Activated naive CD4-positive, alpha-beta T cell treated with anti-CD3 and anti-CD28 coated beads for 36 hours (primary cell): ENCODE measurements at regions of chr15 and their contacts with region 1.

Region 1: DNA sequence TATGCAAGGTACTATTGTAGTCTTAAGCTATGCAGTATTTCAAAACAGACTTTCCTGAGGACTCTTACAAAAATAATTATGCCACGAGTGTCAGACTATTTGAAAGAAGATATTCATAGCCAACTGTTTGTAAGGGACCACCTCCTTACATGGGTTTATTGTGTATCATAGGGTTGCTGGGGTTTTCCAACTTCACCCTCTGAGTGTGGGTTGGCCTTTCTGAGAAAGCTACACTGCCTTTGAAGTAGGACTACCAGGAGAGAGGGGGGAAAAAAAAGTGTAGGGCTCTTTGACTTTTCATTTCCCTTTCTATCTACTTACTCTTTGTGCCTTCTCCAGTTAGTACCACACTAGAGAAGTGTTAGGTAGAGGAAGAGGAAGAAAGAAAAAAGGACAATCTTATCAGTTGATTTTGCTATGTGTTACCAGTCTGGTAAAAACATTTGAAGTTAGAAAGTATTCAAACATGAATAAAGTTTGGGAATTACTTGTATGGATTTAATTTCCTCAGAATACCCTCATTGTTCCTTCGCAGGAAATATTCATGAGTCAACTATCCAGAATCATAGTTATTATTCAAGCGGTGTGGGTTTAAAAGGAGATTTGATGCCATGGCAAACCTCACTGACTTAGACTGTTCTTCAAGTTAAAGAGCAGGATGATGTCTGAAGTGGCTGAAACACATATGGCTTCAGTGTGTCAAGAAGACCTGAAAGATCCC is 329.3 kb upstream of the THBS1 start:
- DNase-seq: peak; percentile 6
- H3K4me3 Mint-ChIP-seq: no peak overlapping the region
- H3K27ac Mint-ChIP-seq: no peak overlapping the region
- H3K4me1 Mint-ChIP-seq: peaks cover 10% of the 10 kb centered on the region
- H3K27me3 Mint-ChIP-seq: peaks cover 14% of the 10 kb centered on the region

Region 2: GRCh38 chr15:39125904-39126303 is 125.7 kb before region 1 on chr15:
- CTCF ChIA-PET with region 1: no interaction called
- intact Hi-C with region 1: loop called (anchors 10 kb)
- DNase-seq: peak; percentile 47
- H3K4me3 Mint-ChIP-seq: no peak overlapping the region
- H3K27ac Mint-ChIP-seq: no peak overlapping the region
- H3K4me1 Mint-ChIP-seq: no peaks in the 10 kb centered on the region
- H3K27me3 Mint-ChIP-seq: peaks cover 6% of the 10 kb centered on the region

Region 3: GRCh38 chr15:39140060-39140604 is 111.4 kb before region 1 on chr15:
- CTCF ChIA-PET with region 1: no interaction called
- intact Hi-C with region 1: no loop called
- DNase-seq: peak; percentile 20
- H3K4me3 Mint-ChIP-seq: no peak overlapping the region
- H3K27ac Mint-ChIP-seq: no peak overlapping the region
- H3K4me1 Mint-ChIP-seq: peaks cover 17% of the 10 kb centered on the region
- H3K27me3 Mint-ChIP-seq: peaks cover 13% of the 10 kb centered on the region

Region 4: GRCh38 chr15:39235092-39235795 is 16.3 kb before region 1 on chr15:
- CTCF ChIA-PET with region 1: no interaction called
- intact Hi-C with region 1: no loop called
- DNase-seq: no peak
- H3K4me3 Mint-ChIP-seq: no peak overlapping the region
- H3K27ac Mint-ChIP-seq: no peak overlapping the region
- H3K4me1 Mint-ChIP-seq: no peaks in the 10 kb centered on the region
- H3K27me3 Mint-ChIP-seq: no peaks in the 10 kb centered on the region

Region 5: DNA sequence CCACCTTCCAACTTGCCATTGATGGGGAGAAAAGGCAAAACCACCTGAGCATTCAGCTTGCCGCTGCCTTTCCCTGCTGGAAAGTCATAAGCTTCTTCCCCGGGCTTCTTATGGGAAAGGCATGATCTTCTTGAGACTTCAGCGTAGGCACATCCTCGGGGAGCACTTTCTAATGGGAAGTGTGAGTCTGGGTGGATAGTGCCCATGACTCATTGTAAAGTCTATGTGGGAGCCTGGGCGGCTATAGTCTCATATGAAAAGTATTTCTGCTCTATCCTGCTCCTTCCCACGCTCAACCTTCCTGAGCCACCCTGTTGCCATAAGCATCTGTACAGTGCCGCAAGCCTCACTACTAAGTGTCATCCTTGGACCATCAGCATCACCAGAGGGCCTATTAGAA is 19.4 kb after region 1 on chr15:
- CTCF ChIA-PET with region 1: no interaction called
- intact Hi-C with region 1: no loop called
- DNase-seq: no peak
- H3K4me3 Mint-ChIP-seq: no peak overlapping the region
- H3K27ac Mint-ChIP-seq: no peak overlapping the region
- H3K4me1 Mint-ChIP-seq: no peaks in the 10 kb centered on the region
- H3K27me3 Mint-ChIP-seq: peaks cover 4% of the 10 kb centered on the region